PC-9 (cell line): ENCODE measurements at regions of chr3 and their contacts with region 1.

Region 1: DNA sequence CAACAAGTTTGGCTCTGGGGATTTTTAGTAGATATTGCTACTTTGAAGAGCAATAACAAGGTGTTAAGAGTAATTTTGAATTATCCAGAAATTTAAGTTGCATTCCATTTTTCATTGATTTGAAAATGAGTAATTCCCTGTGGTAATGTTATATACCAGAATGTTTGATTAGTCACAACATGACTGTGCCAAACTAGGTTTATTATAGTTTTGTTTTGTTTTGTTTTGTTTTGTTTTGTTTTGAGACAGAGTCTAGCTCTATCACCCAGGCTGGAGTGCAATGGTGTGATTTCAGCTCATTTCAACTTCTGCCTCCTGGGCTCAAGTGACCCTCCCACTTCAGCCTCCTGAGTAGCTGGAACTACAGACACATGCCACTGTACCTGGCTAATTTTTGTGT is 40.7 kb downstream of the CNOT10 start:
- DNase-seq: no peak
- H3K4me3 ChIP-seq: no peak overlapping the region
- H3K27ac ChIP-seq: no peak overlapping the region
- H3K4me1 ChIP-seq: no peaks in the 10 kb centered on the region
- H3K27me3 ChIP-seq: no peaks in the 10 kb centered on the region
- CTCF ChIP-seq: no peak

Region 2: DNA sequence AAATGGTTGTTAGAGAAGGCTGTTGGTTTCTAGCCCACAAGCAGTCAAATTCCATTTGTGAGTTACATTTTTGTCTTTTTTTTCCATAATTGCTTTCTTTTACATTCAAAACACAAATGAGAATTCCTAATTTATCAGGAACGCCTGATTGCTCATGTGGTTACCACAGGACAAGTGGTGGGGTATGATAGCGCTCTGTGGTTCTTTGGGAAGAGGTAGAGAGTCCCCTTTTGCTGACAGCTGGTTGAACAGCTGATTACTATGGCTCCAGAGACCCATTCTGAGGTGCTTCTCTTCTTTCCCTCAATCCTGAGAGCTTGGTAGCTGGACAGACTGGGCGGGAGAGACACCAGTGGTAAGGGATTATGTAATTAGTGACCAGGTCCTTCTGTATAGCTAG is 16.4 kb before region 1 on chr3:
- CTCF ChIA-PET with region 1: no interaction called
- POLR2A ChIA-PET with region 1: interaction called, 11 read pairs
- intact Hi-C with region 1: no loop called
- DNase-seq: no peak
- H3K4me3 ChIP-seq: no peak overlapping the region
- H3K27ac ChIP-seq: no peak overlapping the region
- H3K4me1 ChIP-seq: no peaks in the 10 kb centered on the region
- H3K27me3 ChIP-seq: no peaks in the 10 kb centered on the region
- CTCF ChIP-seq: no peak